HepG2 (cell line): ENCODE measurements at regions of chr4 and their contacts with region 1.

Region 1: DNA sequence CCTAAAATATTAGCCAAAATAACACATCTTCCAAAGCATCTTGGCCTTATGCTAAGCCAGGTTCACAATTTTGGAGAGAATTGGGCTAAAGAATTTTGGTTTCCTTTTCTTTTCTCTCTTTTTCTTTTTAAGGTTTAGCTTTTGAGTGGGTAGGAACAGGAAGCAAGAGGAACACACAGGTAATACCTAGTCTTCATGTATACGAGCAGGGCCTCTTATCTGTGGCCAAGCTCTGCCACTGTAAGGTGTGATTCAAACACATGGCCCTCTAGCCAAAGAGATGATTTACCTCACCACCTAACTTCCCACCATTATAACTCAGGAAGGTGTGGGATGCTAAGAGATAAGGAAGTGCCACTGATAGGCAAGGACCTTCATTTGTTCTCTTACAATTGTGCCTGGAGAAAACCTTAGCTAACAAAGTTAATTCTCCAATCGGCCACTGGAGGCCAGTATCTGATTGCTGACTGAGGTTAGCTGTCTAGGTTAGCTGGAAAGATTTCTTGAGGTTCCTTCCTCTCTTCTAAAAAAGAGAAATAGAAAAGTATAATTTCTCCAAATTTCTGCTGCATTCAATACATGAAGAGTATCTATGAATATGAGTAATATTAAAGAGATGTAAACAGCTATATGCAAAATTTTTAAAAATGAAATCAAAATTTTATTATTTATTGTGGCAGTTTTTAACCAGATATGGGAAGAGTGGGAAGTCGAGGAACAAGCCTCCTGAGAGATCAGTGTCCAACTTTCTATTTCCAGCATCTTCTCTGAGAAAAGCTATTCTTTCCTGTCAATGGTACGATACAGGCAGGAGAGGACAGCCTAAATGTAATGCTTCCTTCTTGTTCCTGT is 30.1 kb upstream of the BBS7 start:
- DNase-seq: peak; percentile 45
- ATAC-seq: peak; percentile 87
- H3K4me3 ChIP-seq: no peak overlapping the region
- H3K27ac ChIP-seq: no peak overlapping the region
- H3K4me1 ChIP-seq: no peaks in the 10 kb centered on the region
- H3K27me3 ChIP-seq: no peaks in the 10 kb centered on the region
- CTCF ChIP-seq: peak; percentile 81
- EP300 ChIP-seq: no peak
- POLR2A ChIP-seq: no peak
- RAD21 ChIP-seq: peak; percentile 63

Region 2: DNA sequence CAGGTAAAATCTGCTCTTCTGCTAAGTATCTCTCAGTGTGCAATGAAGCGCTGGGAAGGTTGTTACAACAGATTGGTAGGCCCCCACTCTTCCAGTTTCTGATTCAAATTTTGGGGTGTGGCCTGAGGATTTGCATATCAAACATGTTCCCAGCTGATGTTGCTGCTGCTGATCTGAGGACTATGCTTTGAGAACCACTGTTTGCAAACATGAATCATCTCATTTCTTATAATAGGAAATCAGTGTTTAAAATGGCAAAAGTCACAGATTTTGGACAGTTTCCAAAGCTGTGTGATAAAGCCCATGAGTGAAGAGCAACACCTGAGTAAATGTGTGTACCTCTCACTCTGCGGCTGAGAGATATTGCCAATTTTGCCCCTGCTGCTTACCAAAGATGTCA is 791.8 kb before region 1 on chr4:
- CTCF ChIA-PET with region 1: no interaction called
- POLR2A ChIA-PET with region 1: no interaction called
- in situ Hi-C with region 1: no loop called
- intact Hi-C with region 1: no loop called
- DNase-seq: no peak
- ATAC-seq: no peak
- H3K4me3 ChIP-seq: no peak overlapping the region
- H3K27ac ChIP-seq: no peak overlapping the region
- H3K4me1 ChIP-seq: no peaks in the 10 kb centered on the region
- H3K27me3 ChIP-seq: no peaks in the 10 kb centered on the region
- CTCF ChIP-seq: no peak
- EP300 ChIP-seq: no peak
- POLR2A ChIP-seq: no peak
- RAD21 ChIP-seq: no peak

Region 3: DNA sequence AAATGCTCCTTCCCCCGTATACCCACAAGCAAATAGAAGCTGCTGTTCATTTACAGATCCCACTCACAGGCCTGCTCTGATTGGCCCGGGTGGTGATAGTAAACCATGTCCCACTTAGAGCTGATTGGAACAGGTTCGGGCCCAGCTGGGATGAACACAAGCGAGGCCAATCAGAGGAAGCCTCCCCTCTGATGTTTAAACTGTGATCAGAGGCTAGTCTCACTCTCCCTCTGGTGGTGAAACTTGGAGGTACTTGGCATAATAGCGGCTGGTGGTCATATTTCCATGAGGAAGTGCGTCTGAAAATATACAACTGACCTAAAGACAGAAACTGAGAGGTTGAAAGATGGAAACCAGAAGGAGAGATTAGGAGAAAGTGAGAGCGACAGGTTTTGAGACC is 103.0 kb after region 1 on chr4:
- CTCF ChIA-PET with region 1: interaction called, 25 read pairs
- POLR2A ChIA-PET with region 1: no interaction called
- in situ Hi-C with region 1: loop called (anchors 5 kb)
- intact Hi-C with region 1: loop called (anchors 1 kb)
- DNase-seq: peak; percentile 64
- ATAC-seq: peak; percentile 99
- H3K4me3 ChIP-seq: no peak overlapping the region
- H3K27ac ChIP-seq: no peak overlapping the region
- H3K4me1 ChIP-seq: 0 out of 2 replicates have a peak, but pooled peaks cover 6% of the 10 kb centered on the region
- H3K27me3 ChIP-seq: no peaks in the 10 kb centered on the region; a peak in 1 of 5 replicates
- CTCF ChIP-seq: peak; percentile 72
- EP300 ChIP-seq: no peak
- POLR2A ChIP-seq: no peak
- RAD21 ChIP-seq: peak; percentile 68

Region 4: GRCh38 chr4:122052677-122053076 is 152.3 kb after region 1 on chr4:
- CTCF ChIA-PET with region 1: no interaction called
- POLR2A ChIA-PET with region 1: no interaction called
- in situ Hi-C with region 1: no loop called
- intact Hi-C with region 1: no loop called
- DNase-seq: no peak
- ATAC-seq: no peak
- H3K4me3 ChIP-seq: no peak overlapping the region
- H3K27ac ChIP-seq: no peak overlapping the region
- H3K4me1 ChIP-seq: no peaks in the 10 kb centered on the region
- H3K27me3 ChIP-seq: no peaks in the 10 kb centered on the region
- CTCF ChIP-seq: no peak
- EP300 ChIP-seq: no peak
- POLR2A ChIP-seq: no peak
- RAD21 ChIP-seq: no peak

Region 5: GRCh38 chr4:122224348-122224747 is 324.0 kb after region 1 on chr4:
- CTCF ChIA-PET with region 1: no interaction called
- POLR2A ChIA-PET with region 1: no interaction called
- in situ Hi-C with region 1: no loop called
- intact Hi-C with region 1: loop called (anchors 2 kb)
- DNase-seq: no peak
- ATAC-seq: peak; percentile 51; the same call in 1 of the 3 replicates
- H3K4me3 ChIP-seq: no peak overlapping the region
- H3K27ac ChIP-seq: no peak overlapping the region
- H3K4me1 ChIP-seq: peaks cover 1% of the 10 kb centered on the region
- H3K27me3 ChIP-seq: no peaks in the 10 kb centered on the region
- CTCF ChIP-seq: peak; percentile 30
- EP300 ChIP-seq: no peak
- POLR2A ChIP-seq: no peak
- RAD21 ChIP-seq: no peak

Region 6: DNA sequence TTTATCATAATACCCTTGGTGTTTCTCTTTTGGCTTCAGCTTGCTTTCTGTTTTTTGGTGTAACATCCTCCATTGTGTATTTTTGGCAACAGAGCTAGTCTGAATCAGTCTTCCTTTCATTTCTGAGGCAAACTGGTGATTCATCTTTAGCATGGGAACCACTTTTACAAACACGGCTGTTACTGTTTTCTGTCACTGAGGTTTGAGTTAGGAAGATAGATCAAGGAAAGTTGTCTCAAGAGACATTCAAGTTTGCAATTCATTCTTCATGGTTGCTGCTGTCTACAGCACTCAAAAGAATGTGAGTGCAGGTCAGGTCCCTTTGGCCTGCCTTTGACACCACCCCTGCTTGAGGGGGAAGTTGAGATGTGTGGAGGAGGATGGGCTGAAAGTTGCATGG is 684.2 kb after region 1 on chr4:
- CTCF ChIA-PET with region 1: no interaction called
- POLR2A ChIA-PET with region 1: no interaction called
- in situ Hi-C with region 1: loop called (anchors 10 kb)
- intact Hi-C with region 1: no loop called
- DNase-seq: no peak
- ATAC-seq: no peak
- H3K4me3 ChIP-seq: no peak overlapping the region
- H3K27ac ChIP-seq: no peak overlapping the region
- H3K4me1 ChIP-seq: no peaks in the 10 kb centered on the region
- H3K27me3 ChIP-seq: peaks cover 0 to 6% of the 10 kb centered on the region in 2 experiments; a peak in 1 of 5 replicates
- CTCF ChIP-seq: no peak
- EP300 ChIP-seq: no peak
- POLR2A ChIP-seq: no peak
- RAD21 ChIP-seq: no peak

Region 7: GRCh38 chr4:122716825-122717448 is 816.6 kb after region 1 on chr4:
- CTCF ChIA-PET with region 1: no interaction called
- POLR2A ChIA-PET with region 1: no interaction called
- in situ Hi-C with region 1: no loop called
- intact Hi-C with region 1: loop called (anchors 2 kb)
- DNase-seq: peak; percentile 50
- ATAC-seq: peak; percentile 94
- H3K4me3 ChIP-seq: no peak overlapping the region
- H3K27ac ChIP-seq: no peak overlapping the region
- H3K4me1 ChIP-seq: no peaks in the 10 kb centered on the region
- H3K27me3 ChIP-seq: no peaks in the 10 kb centered on the region; a peak in 1 of 5 replicates
- CTCF ChIP-seq: peak; percentile 75
- EP300 ChIP-seq: no peak
- POLR2A ChIP-seq: no peak
- RAD21 ChIP-seq: no peak